Ovary (tissue), 10 donors: ENCODE measurements at regions of chr6 and their contacts with region 1.

Region 1: DNA sequence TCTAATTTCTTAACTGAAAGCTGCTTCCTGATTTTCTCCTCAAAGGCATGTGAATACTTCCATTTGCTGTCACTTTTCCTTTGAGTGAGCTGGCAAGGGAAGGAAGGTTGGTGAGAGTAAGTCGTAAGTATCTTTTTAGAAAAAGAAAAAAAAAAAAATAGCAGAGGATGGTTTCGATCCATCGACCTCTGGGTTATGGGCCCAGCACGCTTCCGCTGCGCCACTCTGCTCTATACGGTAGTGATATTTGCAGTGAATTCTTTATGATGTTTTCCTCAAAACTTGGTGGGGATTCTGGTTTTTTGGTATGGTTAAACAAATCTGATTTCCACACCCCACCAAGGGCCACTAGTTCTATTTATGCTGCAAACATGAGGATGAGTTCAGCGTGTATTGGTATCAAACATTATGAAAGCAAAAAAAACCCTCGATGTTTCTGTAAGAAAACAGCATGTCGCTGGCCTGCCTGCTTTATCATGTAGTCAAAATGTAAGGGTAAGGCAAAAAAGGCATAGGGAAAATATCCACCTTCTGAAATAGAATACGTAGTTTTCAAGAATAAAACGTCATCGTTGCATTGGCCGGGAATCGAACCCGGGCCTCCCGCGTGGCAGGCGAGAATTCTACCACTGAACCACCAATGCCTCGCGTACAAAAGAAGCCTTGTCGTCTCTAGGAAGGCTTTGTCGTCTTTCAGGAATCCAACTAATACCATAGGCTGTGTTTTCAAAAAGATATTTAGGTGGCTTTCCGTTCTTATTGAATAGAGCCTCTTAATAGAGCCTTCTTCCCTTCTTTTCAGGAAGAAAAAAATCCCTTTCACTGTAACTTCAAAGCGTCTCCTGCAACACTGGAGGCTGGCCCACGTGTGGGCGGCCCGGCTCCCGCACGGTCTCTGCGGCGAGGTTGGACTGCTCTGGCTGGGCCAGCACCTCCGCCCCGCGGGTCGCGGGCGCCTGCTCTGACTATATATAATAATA is 9.6 kb downstream of the OR2B2 start:
- DNase-seq: peak; percentile 69 to 89 (median 87)
- H3K4me3 ChIP-seq: peak overlapping the region; percentile 43
- H3K27ac ChIP-seq: peak overlapping the region; percentile 42 to 87
- H3K4me1 ChIP-seq: peaks cover 1% of the 10 kb centered on the region
- H3K27me3 ChIP-seq: no peaks in the 10 kb centered on the region
- CTCF ChIP-seq: no peak
- EP300 ChIP-seq: no peak
- POLR2A ChIP-seq: no peak

Region 2: DNA sequence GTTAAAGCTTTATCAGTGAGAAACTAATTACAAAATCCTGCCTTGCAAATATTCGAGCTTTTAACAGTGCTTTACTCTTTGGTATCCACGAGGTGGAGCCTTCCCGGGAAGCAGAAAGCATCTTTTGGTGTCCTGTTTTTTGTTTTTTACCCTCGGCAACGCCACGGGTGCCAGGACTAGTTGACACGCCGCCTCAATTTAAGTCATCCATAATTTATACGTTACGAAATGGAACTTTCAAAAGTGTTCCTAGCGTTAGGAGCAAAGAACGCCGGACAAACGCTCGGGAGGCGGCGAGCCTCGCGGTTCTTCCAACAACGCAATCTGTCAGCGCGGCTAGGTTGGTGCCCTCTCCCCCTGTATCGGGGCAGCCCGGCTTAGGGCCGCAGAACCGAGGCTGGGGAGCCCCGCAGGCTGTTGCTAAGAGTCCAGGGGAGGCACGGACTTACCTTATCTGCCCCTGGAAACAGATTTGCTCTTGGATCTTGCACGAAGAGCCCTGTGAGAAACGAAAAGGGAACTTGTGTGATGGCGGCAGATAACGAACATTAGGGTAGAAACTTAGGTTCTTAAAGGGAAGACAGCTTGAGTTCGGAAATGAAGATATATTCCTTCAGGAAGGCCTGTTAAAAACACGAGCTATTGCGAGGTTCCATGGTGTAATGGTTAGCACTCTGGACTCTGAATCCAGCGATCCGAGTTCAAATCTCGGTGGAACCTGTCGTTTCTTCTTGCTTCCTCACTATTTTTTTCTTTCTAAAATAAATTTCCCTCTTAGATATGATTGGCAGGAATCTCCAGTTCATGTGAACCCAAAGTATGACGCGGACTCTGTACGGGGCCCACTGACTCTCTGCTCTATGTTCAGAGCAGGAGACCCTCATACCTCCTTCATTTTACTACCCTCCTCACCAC is 383.5 kb before region 1 on chr6:
- intact Hi-C with region 1: loop called in 2 of 4 experiments (anchors 5 to 10 kb)
- DNase-seq: peak; percentile 63 to 75 (median 74)
- H3K4me3 ChIP-seq: peak overlapping the region; percentile 68
- H3K27ac ChIP-seq: peak overlapping the region; percentile 53 to 89
- H3K4me1 ChIP-seq: no peaks in the 10 kb centered on the region
- H3K27me3 ChIP-seq: no peaks in the 10 kb centered on the region
- CTCF ChIP-seq: peak; percentile 66 to 79 (median 68)
- EP300 ChIP-seq: no peak
- POLR2A ChIP-seq: no peak

Region 3: DNA sequence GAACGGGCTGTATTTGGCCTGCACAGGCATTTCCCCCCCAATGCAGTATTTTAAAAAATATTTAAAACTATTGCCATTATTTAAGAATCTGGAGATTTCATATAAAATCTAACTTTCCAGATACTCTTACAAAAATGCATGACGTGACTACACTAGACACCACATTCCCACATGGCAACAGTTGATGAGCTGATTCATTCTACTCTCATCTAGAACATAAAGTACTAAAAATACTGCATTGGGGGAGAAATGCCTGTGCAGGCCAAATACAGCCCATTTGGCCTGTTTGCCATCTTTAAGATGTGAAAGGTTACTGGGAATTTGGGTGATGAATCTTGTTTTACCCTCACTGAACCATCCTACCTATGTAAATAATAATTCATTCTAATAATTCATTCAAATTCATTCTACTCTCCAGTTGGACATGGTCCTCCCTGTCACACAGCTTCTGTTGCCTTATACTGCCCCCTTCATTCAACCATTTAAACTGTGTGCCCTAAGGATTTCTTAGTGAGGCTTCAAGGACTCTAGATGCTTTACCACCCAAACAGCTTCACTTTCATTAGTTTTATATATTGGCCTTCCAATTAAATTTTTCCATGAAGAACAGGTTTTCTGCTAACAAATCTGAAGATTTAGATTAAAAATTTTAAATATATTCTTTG is 214.9 kb after region 1 on chr6:
- intact Hi-C with region 1: no loop called
- DNase-seq: no peak
- H3K4me3 ChIP-seq: no peak overlapping the region
- H3K27ac ChIP-seq: no peak overlapping the region
- H3K4me1 ChIP-seq: no peaks in the 10 kb centered on the region
- H3K27me3 ChIP-seq: no peaks in the 10 kb centered on the region
- CTCF ChIP-seq: no peak
- EP300 ChIP-seq: no peak
- POLR2A ChIP-seq: no peak